Activated CD8-positive, alpha-beta memory T cell treated with anti-CD3 and anti-CD28 coated beads, Interleukin-2, amount 10 ng/mL, durations not matched to agents 7 days and 5 days (primary cell): ENCODE measurements at regions of chr16 and their contacts with region 1.

Region 1: GRCh38 chr16:21189311-21189710 is 22.1 kb downstream of the ZP2 start:
- DNase-seq: no peak
- ATAC-seq: no peak
- H3K4me3 Mint-ChIP-seq: no peak overlapping the region
- H3K27ac Mint-ChIP-seq: no peak overlapping the region
- H3K4me1 Mint-ChIP-seq: peaks cover 10% of the 10 kb centered on the region
- H3K27me3 Mint-ChIP-seq: peaks cover 21% of the 10 kb centered on the region

Region 2: DNA sequence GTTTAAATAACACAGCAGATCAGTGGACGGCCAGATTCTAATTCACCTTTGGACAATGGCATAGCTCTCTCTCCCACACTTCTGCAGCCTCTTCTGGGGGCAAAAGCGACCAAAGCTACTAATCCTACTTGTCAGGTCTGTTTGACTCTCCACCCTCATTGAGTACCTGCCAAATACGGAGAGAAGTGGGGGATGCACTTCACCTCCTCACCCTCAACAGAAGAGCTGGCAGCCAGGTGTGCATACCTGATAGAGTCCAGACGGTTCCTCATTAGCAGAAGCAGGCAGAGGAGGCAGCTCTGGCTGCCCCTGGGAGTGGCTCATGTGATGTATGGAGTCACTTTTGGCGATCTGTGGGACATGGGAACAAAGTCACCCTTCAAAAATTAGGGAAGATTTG is 43.6 kb before region 1 on chr16:
- CTCF ChIA-PET with region 1: no interaction called
- DNase-seq: no peak
- ATAC-seq: no peak
- H3K4me3 Mint-ChIP-seq: no peak overlapping the region
- H3K27ac Mint-ChIP-seq: no peak overlapping the region
- H3K4me1 Mint-ChIP-seq: no peaks in the 10 kb centered on the region
- H3K27me3 Mint-ChIP-seq: peaks cover 35% of the 10 kb centered on the region

Region 3: GRCh38 chr16:21158208-21159110 is 30.9 kb before region 1 on chr16 and contains the start of gene LDAF1:
- CTCF ChIA-PET with region 1: interaction called, 11 read pairs
- DNase-seq: peak; percentile 86
- ATAC-seq: peak; percentile 99
- H3K4me3 Mint-ChIP-seq: peak within 1 kb of the TSS; percentile 81
- H3K27ac Mint-ChIP-seq: peak within 1 kb of the TSS; percentile 69
- H3K4me1 Mint-ChIP-seq: peaks cover 20% of the 10 kb centered on the region
- H3K27me3 Mint-ChIP-seq: no peaks in the 10 kb centered on the region
- total RNA-seq, gene LDAF1: 8.9 to 9.5 TPM

Region 4: DNA sequence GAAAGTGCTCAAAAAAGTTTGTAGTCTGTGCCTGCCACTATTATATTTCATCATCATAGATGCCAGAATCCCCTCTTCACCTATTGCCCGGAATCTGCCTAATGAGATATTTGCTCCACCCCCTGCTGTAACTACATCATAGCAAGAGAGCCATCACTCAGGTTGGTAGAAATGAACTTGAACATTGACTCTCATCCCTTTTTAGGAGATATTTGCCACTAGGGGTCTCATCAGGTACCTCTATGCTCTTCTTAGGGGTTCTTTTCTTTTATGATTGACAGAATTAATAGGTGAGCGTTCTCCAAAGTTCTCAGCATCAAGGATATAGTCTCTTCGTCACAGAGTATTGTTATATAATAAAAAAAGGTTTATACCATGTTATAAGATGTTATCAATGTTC is 64.2 kb after region 1 on chr16:
- CTCF ChIA-PET with region 1: no interaction called
- DNase-seq: no peak
- ATAC-seq: no peak
- H3K4me3 Mint-ChIP-seq: no peak overlapping the region
- H3K27ac Mint-ChIP-seq: no peak overlapping the region
- H3K4me1 Mint-ChIP-seq: no peaks in the 10 kb centered on the region
- H3K27me3 Mint-ChIP-seq: peaks cover 35% of the 10 kb centered on the region

Region 5: GRCh38 chr16:21300309-21301167 is 111.2 kb after region 1 on chr16:
- CTCF ChIA-PET with region 1: interaction called, 16 read pairs
- DNase-seq: peak; percentile 70
- ATAC-seq: peak; percentile 70
- H3K4me3 Mint-ChIP-seq: peak overlapping the region; percentile 87
- H3K27ac Mint-ChIP-seq: peak overlapping the region; percentile 31
- H3K4me1 Mint-ChIP-seq: peaks cover 17% of the 10 kb centered on the region
- H3K27me3 Mint-ChIP-seq: peaks cover 69% of the 10 kb centered on the region